WTC11 (cell line): ENCODE measurements at regions of chr1 and their contacts with region 1.

Region 1: DNA sequence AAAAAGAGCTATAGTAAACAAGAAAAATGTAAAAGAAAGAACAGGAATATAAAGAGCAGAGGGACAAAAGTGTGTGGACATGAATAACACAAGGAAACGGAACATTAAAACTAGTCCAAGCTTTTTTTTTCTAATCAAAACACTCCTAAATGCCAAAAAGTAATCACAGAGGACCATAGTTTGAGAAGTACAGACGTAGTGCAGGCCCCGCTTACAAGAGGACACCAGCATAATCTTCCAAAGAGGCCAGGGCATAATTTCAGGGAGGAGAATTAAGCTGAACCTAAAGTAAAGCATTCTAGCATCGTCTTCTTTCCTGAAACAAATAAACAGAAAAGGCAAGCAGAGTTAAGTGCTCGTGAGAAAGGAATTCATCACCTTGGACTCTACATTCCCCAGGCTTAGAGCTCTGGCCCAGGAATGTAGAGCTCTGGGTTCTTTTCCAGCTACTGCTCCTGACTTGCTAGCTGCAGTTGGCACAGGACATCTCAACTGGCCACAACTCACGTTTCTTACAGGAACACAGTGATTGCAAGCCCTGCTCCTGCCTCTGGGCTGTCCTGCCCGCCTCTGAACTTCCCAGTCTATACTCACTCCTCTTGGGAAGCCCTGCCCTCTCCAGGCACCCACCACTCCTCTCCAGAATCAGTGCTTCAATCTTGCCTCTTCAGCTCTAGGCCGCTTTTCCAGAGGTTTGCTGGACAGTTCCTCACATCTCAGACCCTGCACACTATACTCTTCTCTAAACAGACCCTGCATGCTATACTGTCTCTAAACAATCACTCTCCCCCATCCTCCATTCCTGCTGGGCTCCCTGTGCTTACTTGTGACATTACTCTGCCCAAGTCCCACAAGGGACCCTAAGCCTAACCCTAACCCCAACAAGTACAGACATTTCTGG is 9.8 kb downstream of the RGS8 start:
- DNase-seq: no peak
- ATAC-seq: peak; percentile 75
- H3K4me3 Mint-ChIP-seq: no peak overlapping the region
- H3K27ac Mint-ChIP-seq: no peak overlapping the region
- H3K4me1 Mint-ChIP-seq: peaks cover 56% of the 10 kb centered on the region
- H3K27me3 Mint-ChIP-seq: no peaks in the 10 kb centered on the region
- CTCF ChIP-seq: no peak

Region 2: DNA sequence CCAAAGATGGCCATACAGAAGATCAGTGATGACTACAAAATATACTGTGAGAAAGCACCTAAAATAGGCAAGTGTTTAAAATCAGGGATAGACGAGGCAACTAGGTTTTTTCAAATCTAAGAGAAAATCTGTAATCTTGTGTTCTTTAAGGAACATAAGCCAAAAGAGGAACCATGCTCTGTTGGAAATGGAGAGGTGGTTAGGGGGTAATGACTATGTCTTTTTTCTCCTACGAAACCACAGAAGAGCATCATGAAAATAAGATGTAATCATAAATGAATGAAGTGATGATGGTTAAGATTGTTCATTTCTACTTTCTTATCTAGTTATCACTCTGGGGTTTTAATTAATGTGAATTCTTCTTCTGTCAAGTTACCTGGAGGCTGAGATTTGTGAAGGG is 181.5 kb before region 1 on chr1:
- CTCF ChIA-PET with region 1: no interaction called
- POLR2A ChIA-PET with region 1: no interaction called
- DNase-seq: no peak
- ATAC-seq: no peak
- H3K4me3 Mint-ChIP-seq: no peak overlapping the region
- H3K27ac Mint-ChIP-seq: no peak overlapping the region
- H3K4me1 Mint-ChIP-seq: no peaks in the 10 kb centered on the region
- H3K27me3 Mint-ChIP-seq: no peaks in the 10 kb centered on the region; the same call in 1 of the 2 replicates
- CTCF ChIP-seq: no peak

Region 3: DNA sequence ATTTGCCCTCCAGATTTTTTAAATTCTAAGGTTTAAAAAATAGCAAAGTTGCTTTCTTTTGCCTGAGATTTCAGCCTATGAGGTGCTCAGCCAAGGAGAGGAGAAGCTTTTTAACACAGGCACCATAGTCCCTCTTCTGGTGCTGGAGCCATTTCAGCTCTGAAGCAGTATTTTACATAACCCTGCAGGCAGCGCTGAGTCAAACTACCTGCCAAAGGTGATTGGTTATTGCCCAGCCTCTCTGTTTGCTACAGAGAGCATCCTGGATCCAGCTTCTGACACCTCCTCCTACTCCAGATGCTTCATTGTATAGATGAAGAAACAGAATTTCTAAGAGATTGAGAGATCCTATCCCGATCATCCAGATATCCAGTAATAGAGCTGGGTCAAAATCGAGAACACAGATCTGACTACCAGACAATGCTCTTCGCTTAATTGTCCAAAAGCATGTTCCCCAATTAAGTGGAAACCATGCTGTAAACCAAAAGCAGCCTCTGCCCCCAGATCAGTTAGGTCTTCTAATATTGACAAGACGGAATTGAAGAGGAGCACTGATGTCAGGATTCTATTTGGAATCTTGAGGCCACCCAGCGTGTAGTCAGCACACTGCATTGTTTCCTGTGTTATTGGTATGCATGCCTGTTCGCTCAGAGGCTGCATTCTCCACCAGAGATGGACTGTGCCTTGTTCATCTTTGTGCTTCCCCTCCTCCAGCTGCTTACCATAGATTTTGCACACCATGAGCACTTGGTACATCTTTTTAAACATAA is 12.3 kb before region 1 on chr1:
- CTCF ChIA-PET with region 1: interaction called, 10 read pairs
- POLR2A ChIA-PET with region 1: interaction called, 3 read pairs
- DNase-seq: peak; percentile 31
- ATAC-seq: peak; percentile 79
- H3K4me3 Mint-ChIP-seq: peak overlapping the region; percentile 34
- H3K27ac Mint-ChIP-seq: peak overlapping the region; percentile 71
- H3K4me1 Mint-ChIP-seq: peaks cover 60% of the 10 kb centered on the region
- H3K27me3 Mint-ChIP-seq: peaks cover 19% of the 10 kb centered on the region
- CTCF ChIP-seq: no peak

Region 4: GRCh38 chr1:182739545-182739944 is 64.9 kb after region 1 on chr1:
- CTCF ChIA-PET with region 1: no interaction called
- POLR2A ChIA-PET with region 1: no interaction called
- DNase-seq: peak; percentile 35
- ATAC-seq: peak; percentile 84
- H3K4me3 Mint-ChIP-seq: no peak overlapping the region
- H3K27ac Mint-ChIP-seq: no peak overlapping the region
- H3K4me1 Mint-ChIP-seq: peaks cover 7% of the 10 kb centered on the region
- H3K27me3 Mint-ChIP-seq: no peaks in the 10 kb centered on the region; the same call in 1 of the 2 replicates
- CTCF ChIP-seq: no peak